IMR-90 (cell line): ENCODE measurements at regions of chr7 and their contacts with region 1.

Region 1: DNA sequence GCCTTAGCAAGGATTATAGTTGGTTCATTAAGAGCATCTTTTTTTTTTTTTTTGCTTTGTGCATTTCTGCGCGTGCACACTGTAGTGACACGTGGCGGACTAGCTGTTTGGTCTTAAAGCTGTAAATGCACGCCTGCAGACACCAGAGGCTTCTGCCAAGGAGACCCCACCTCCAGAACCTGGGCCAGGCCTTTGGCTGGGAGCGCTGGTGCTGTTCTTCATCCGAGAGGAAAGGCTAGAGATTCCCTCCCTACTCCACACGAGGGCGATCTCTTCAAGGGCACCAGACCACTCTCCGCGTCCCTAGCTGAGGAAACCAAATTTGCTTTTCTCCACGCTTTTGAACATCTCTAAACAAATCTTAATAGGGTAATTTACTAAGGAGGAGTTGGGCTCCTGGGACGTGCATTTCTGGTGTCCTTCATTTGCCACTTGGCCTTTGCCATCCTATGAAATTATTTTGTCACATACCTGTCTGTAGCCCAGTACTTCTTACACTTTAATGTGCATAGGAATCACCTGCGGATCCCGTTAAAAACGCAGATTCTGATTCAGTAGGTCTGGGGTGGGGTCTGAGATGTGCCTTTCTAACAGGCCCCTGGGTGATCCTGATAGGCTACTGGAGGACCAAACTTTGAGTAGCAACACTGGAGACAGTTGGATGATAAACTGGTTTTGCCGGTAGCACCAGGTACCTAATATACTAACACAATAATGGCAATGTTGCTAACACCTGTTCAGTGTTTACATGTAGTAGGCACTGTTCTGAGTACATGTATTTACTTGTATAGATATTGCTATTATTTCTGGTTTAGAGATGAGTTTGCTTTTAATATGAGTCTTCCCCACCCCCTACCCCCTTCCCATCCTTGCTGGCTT is 1.3 kb upstream of the SLC26A5 start:
- DNase-seq: peak; percentile 62
- ATAC-seq: peak; percentile 90
- H3K4me3 ChIP-seq: no peak overlapping the region
- H3K27ac ChIP-seq: no peak overlapping the region
- H3K4me1 ChIP-seq: peaks cover 4% of the 10 kb centered on the region; the same call in 1 of the 2 replicates
- H3K27me3 ChIP-seq: peaks cover 27% of the 10 kb centered on the region
- CTCF ChIP-seq: peak; percentile 83
- POLR2A ChIP-seq: no peak
- RAD21 ChIP-seq: peak; percentile 81

Region 2: DNA sequence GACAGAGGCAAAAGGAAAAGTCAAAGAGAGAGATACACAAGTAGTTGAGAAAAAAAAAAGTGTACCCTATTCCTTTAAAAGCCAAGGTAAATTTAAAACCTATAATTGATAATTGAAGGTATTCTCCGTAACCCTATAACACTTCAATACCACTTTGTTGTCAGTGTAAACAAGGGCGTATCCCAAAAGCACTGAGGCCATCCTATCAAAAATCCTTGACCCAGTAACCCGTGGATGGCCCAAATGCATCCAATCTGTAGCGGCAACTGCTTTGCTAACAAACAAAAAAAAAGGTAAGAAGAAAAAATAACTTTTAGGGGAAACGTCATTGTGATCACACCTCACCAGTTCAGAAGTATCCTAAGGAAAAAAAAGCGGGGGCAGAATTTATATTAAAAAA is 293.3 kb before region 1 on chr7:
- CTCF ChIA-PET with region 1: no interaction called
- POLR2A ChIA-PET with region 1: no interaction called
- dilution Hi-C with region 1: no loop called
- in situ Hi-C with region 1: no loop called
- intact Hi-C with region 1: no loop called
- DNase-seq: no peak
- ATAC-seq: no peak
- H3K4me3 ChIP-seq: no peak overlapping the region
- H3K27ac ChIP-seq: no peak overlapping the region
- H3K4me1 ChIP-seq: no peaks in the 10 kb centered on the region
- H3K27me3 ChIP-seq: no peaks in the 10 kb centered on the region; the same call in 1 of the 2 replicates
- CTCF ChIP-seq: no peak
- POLR2A ChIP-seq: no peak
- RAD21 ChIP-seq: no peak

Region 3: GRCh38 chr7:103379270-103379975 is 67.9 kb before region 1 on chr7:
- CTCF ChIA-PET with region 1: no interaction called
- POLR2A ChIA-PET with region 1: no interaction called
- dilution Hi-C with region 1: no loop called
- in situ Hi-C with region 1: no loop called
- intact Hi-C with region 1: no loop called
- DNase-seq: no peak
- ATAC-seq: no peak
- H3K4me3 ChIP-seq: no peak overlapping the region
- H3K27ac ChIP-seq: no peak overlapping the region
- H3K4me1 ChIP-seq: no peaks in the 10 kb centered on the region; the same call in 1 of the 2 replicates
- H3K27me3 ChIP-seq: peaks cover 7% of the 10 kb centered on the region
- CTCF ChIP-seq: no peak
- POLR2A ChIP-seq: no peak
- RAD21 ChIP-seq: no peak

Region 4: GRCh38 chr7:103432712-103433111 is 14.6 kb before region 1 on chr7:
- CTCF ChIA-PET with region 1: no interaction called
- POLR2A ChIA-PET with region 1: interaction called, 11 read pairs
- dilution Hi-C with region 1: no loop called
- in situ Hi-C with region 1: no loop called
- intact Hi-C with region 1: no loop called
- DNase-seq: no peak
- ATAC-seq: no peak
- H3K4me3 ChIP-seq: no peak overlapping the region
- H3K27ac ChIP-seq: no peak overlapping the region
- H3K4me1 ChIP-seq: no peaks in the 10 kb centered on the region
- H3K27me3 ChIP-seq: peaks cover 1% of the 10 kb centered on the region; the same call in 1 of the 2 replicates
- CTCF ChIP-seq: no peak
- POLR2A ChIP-seq: no peak
- RAD21 ChIP-seq: no peak

Region 5: DNA sequence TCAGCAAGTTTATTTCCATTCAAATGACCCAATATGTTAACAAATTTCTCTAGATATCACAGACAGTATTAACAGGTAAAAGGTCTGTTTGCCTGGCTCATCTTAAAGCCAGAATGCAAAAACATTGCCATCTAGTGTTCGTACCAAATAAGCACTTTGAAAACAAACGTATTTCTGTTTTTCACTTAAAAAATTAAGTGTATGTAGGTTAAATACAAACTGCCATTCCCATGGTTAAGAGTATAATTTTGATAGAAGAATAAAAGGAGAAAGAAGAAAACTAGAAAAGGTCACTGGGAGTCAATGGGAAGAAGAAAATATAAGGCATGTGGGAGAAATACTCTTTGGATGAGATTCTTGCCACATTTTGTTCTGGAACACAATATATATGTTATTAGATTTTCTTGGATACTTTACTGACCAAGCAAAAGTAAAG is 709.5 kb after region 1 on chr7:
- CTCF ChIA-PET with region 1: no interaction called
- POLR2A ChIA-PET with region 1: no interaction called
- dilution Hi-C with region 1: no loop called
- in situ Hi-C with region 1: no loop called
- intact Hi-C with region 1: loop called (anchors 2 kb)
- DNase-seq: peak; percentile 57
- ATAC-seq: no peak
- H3K4me3 ChIP-seq: no peak overlapping the region
- H3K27ac ChIP-seq: no peak overlapping the region
- H3K4me1 ChIP-seq: no peaks in the 10 kb centered on the region
- H3K27me3 ChIP-seq: no peaks in the 10 kb centered on the region
- CTCF ChIP-seq: peak; percentile 70
- POLR2A ChIP-seq: no peak
- RAD21 ChIP-seq: peak; percentile 72

Region 6: GRCh38 chr7:104272767-104273384 is 825.6 kb after region 1 on chr7:
- CTCF ChIA-PET with region 1: no interaction called
- POLR2A ChIA-PET with region 1: no interaction called
- dilution Hi-C with region 1: no loop called
- in situ Hi-C with region 1: no loop called
- intact Hi-C with region 1: loop called (anchors 5 kb)
- DNase-seq: peak; percentile 57
- ATAC-seq: peak; percentile 83
- H3K4me3 ChIP-seq: no peak overlapping the region
- H3K27ac ChIP-seq: no peak overlapping the region
- H3K4me1 ChIP-seq: no peaks in the 10 kb centered on the region
- H3K27me3 ChIP-seq: no peaks in the 10 kb centered on the region
- CTCF ChIP-seq: peak; percentile 56
- POLR2A ChIP-seq: no peak
- RAD21 ChIP-seq: peak; percentile 51